ENCODE measurements at regions of chr10 and their contacts with region 1.

Region 1: GRCh38 chr10:125368146-125368545 is 207.8 kb upstream of the CTBP2 start:
- DNase-seq: no peak
- ATAC-seq: no peak
- H3K4me3 ChIP-seq: no peak overlapping the region
- H3K27ac ChIP-seq: no peak overlapping the region
- H3K4me1 ChIP-seq: no peaks in the 10 kb centered on the region
- H3K27me3 ChIP-seq: peaks cover 0 to 19% (median 0%) of the 10 kb centered on the region in 9 donors
- CTCF ChIP-seq: no peak
- POLR2A ChIP-seq: no peak

Region 2: DNA sequence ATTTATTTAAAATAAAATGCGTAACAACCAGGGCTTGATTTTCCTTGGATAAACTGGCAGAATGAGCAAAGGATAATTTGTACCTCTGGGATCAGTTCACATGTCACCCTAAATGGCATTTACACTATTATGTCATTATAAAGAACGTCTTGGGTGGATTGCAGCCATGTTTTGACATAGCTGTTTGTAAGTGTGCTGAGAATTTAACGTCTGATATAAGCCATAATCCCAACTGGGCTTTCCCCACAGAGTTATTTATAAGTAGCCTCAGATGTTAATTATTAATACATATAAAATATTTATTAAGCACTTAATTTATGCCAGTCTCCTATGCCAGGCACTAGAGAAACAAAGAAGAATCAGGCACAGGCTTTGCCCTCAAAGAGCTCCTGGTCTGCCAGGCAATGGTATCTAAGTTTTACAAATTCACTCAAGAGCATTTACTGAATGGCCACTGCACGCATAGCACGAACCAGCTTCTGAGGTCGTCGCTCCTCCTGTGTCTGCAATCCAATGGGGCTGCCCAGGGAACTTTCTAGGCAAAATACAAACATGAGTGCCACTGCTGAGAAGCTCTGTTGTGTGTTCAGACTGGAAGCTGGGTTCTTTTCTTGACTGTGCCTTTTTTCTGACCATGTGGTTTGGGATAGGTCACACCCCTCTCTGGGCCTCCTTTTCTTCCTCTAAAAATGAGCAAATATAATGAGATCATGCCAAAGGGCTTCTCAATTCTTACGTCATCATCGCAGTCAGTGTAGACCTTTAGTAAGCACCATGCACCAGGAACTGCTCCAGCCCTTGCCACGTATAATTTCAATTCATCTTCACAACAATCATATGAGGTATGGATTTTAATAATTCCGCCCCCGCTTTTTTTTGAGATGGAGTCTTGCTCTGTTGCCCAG is 196.5 kb before region 1 on chr10:
- intact Hi-C with region 1: loop called in 1 of 10 experiments (anchors 10 kb)
- DNase-seq: no peak
- ATAC-seq: no peak
- H3K4me3 ChIP-seq: no peak overlapping the region
- H3K27ac ChIP-seq: no peak overlapping the region
- H3K4me1 ChIP-seq: no peaks in the 10 kb centered on the region
- H3K27me3 ChIP-seq: peaks cover 0 to 15% (median 0%) of the 10 kb centered on the region in 9 donors
- CTCF ChIP-seq: no peak
- POLR2A ChIP-seq: no peak

Region 3: DNA sequence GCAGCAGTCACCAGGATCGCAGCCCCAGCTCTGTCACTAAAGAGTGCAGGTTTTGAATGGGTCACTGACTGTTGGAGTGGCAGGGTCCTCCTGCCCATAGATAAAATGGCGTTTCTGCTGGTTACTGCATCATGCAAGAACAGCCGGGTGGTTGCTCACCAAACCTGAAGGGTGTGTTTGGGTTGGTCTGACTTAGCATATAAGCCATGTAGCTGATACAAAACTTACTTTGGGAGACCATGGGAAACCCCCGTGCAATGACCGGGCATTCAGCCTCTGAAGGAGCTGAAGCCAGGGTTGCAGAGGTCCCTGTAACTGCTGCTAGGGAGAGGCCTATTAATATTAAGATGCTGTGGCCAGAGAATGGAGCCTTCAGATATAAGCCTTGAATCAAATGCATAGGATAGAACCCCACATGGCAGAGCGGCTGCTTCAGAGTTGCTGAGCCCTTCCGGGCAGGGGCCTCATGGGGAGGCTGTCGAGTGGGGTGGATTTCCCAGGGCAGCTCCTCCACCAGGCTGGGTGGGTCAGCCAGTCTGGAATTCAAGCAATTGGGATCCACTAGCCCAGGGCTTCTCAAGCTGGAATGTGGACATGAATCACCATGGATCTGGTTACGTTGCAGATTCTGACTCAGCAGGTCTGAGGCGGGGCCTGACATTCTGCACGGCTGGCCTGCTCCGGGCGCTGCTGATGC is 136.9 kb before region 1 on chr10:
- intact Hi-C with region 1: loop called in 1 of 10 experiments (anchors 10 kb)
- DNase-seq: no peak
- ATAC-seq: no peak
- H3K4me3 ChIP-seq: no peak overlapping the region
- H3K27ac ChIP-seq: no peak overlapping the region
- H3K4me1 ChIP-seq: no peaks in the 10 kb centered on the region
- H3K27me3 ChIP-seq: peaks cover 0 to 4% (median 0%) of the 10 kb centered on the region in 9 donors
- CTCF ChIP-seq: no peak
- POLR2A ChIP-seq: no peak

Region 4: GRCh38 chr10:125441151-125441550 is 73.0 kb after region 1 on chr10:
- intact Hi-C with region 1: no loop called
- DNase-seq: no peak
- ATAC-seq: no peak
- H3K4me3 ChIP-seq: no peak overlapping the region
- H3K27ac ChIP-seq: no peak overlapping the region
- H3K4me1 ChIP-seq: no peaks in the 10 kb centered on the region
- H3K27me3 ChIP-seq: peaks cover 0 to 9% (median 0%) of the 10 kb centered on the region in 9 donors
- CTCF ChIP-seq: no peak
- POLR2A ChIP-seq: no peak

Measured in heart left ventricle (tissue), 16 donors.